Motor neuron (in vitro differentiated cells): ENCODE measurements at regions of chr4 and their contacts with region 1.

Region 1: DNA sequence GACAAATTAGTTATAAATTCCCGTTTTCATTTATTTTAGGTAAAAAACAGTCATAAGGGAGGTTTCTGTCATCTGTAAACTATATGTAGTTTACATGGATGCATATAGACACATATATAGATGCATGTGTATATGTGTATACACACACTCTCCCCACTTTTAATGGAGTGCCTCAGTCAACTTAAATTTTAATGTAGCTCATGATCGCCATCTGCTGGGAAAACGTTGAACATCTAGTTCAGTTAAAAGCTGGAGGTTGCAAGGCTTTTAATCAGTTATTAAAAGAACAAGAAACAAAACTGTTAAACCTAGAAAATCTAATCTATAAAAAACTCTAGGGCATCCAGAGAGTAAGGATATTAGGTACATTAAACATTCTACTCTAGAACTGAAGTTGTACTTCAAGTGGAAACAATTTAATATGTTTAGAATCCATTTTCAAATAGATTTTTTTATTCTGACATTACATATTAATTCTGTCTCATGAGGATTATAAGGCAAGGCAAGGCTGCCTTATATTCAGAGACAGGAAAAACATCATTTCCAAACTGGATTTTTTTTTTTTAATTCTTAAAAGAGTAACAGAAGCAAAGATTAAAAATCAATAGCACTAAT is 122.6 kb downstream of the SHISA3 start:
- ATAC-seq: peak; percentile 36 to 72 (median 56)
- H3K4me3 ChIP-seq: no peak overlapping the region
- H3K27ac ChIP-seq: no peak overlapping the region
- H3K4me1 ChIP-seq: no peaks in the 10 kb centered on the region

Region 2: GRCh38 chr4:42282081-42282901 is 237.6 kb before region 1 on chr4:
- in situ Hi-C with region 1: loop called in 6 of 9 experiments (anchors 10 to 25 kb)
- ATAC-seq: peak; percentile 96 to 100 (median 98)
- H3K4me3 ChIP-seq: no peak overlapping the region
- H3K27ac ChIP-seq: no peak overlapping the region
- H3K4me1 ChIP-seq: no peaks in the 10 kb centered on the region

Region 3: DNA sequence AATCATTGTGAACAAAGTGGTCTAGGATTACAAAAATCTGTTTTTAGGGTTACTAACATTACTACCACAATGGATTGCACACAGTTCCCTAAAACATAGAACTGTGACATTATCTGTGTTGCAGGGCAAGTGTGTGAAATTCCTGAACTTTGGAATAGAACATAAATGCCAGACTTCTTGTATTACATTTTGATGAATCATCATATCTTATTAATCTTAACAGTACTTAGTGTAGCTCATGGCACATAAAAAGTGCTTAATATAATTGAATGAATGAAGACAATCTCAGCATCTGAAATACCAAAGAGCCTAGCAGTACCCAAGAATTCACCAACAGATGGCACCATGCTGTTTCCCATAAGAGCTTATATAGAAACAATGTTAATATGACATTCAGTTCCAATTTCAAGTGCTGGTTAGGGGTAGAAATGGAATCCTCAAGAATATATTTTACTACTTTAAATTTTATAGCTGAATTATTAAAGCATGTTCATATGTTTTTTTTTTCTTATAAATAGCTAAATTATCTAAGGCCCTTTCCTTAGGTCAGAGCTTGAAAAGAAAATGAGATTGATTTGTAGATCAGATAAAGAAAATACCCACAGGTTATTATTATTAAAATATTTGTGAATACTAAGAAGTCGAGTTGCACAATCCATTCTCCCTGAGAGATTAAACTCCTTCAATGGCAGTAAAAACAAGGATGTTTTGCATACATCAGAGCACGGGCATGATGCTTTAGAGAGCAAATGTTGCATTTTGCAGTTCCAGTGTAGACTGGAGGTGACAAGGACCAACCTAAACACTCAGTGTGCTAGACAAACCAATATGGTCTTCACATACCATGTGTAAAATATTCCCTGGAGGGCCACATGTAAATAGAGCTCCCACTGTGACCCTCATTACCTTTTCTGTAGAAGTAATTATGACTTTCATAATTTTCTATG is 148.3 kb before region 1 on chr4:
- in situ Hi-C with region 1: loop called in 6 of 9 experiments (anchors 10 to 25 kb)
- ATAC-seq: peak in 7 of 8 experiments; percentile 48 to 86 (median 58)
- H3K4me3 ChIP-seq: no peak overlapping the region
- H3K27ac ChIP-seq: no peak overlapping the region
- H3K4me1 ChIP-seq: no peaks in the 10 kb centered on the region

Region 4: GRCh38 chr4:42396752-42397634 is 122.9 kb before region 1 on chr4 and contains the start of gene SHISA3:
- in situ Hi-C with region 1: loop called in 4 of 9 experiments (anchors 25 kb)
- ATAC-seq: peak; percentile 44 to 69 (median 50)
- H3K4me3 ChIP-seq: peak within 1 kb of the TSS; percentile 41 to 48 (median 43)
- H3K27ac ChIP-seq: no peak within 1 kb of the TSS
- H3K4me1 ChIP-seq: peaks cover 10 to 13% of the 10 kb centered on the region in 2 donors
- total RNA-seq, gene SHISA3: 0.45 to 10.2 (median 3.8) TPM in 6 of 8 experiments, not detected in the others